ENCODE measurements at regions of chr2 and their contacts with region 1.

Region 1: GRCh38 chr2:23524261-23524706 is 139.3 kb downstream of the KLHL29 start:
- DNase-seq: peak; percentile 33 to 92
- H3K4me3 ChIP-seq: peak overlapping the region; percentile 32 to 48
- H3K27ac ChIP-seq: peak overlapping the region; percentile 83 to 94
- H3K4me1 ChIP-seq: peaks cover 13 to 33% of the 10 kb centered on the region in 2 donors
- H3K27me3 ChIP-seq: no peaks in the 10 kb centered on the region
- CTCF ChIP-seq: no peak

Region 2: GRCh38 chr2:23135481-23136100 is 388.7 kb before region 1 on chr2:
- intact Hi-C with region 1: loop called (anchors 10 kb)
- DNase-seq: peak; percentile 23 to 82
- H3K4me3 ChIP-seq: peak overlapping the region in 1 of 2 donors; percentile 29
- H3K27ac ChIP-seq: peak overlapping the region; percentile 44 to 58
- H3K4me1 ChIP-seq: peaks cover 0 to 9% of the 10 kb centered on the region in 2 donors
- H3K27me3 ChIP-seq: no peaks in the 10 kb centered on the region
- CTCF ChIP-seq: no peak

Region 3: GRCh38 chr2:23384551-23385349 is 139.5 kb before region 1 on chr2 and contains the start of gene KLHL29:
- intact Hi-C with region 1: loop called (anchors 2 kb)
- DNase-seq: peak in 1 of 2 donors; percentile 88
- H3K4me3 ChIP-seq: peak within 1 kb of the TSS; percentile 79 to 86
- H3K27ac ChIP-seq: peak within 1 kb of the TSS; percentile 80 to 87
- H3K4me1 ChIP-seq: peaks cover 0 to 2% of the 10 kb centered on the region in 2 donors
- H3K27me3 ChIP-seq: no peaks in the 10 kb centered on the region
- CTCF ChIP-seq: no peak
- total RNA-seq, gene KLHL29: 16.3 TPM

Region 4: GRCh38 chr2:23426263-23426905 is 97.9 kb before region 1 on chr2:
- intact Hi-C with region 1: loop called (anchors 1 kb)
- DNase-seq: peak; percentile 51 to 91
- H3K4me3 ChIP-seq: no peak overlapping the region
- H3K27ac ChIP-seq: peak overlapping the region; percentile 74 to 83
- H3K4me1 ChIP-seq: peaks cover 9 to 21% of the 10 kb centered on the region in 2 donors
- H3K27me3 ChIP-seq: no peaks in the 10 kb centered on the region
- CTCF ChIP-seq: no peak

Region 5: GRCh38 chr2:23497063-23497462 is 27.2 kb before region 1 on chr2:
- intact Hi-C with region 1: loop called (anchors 1 kb)
- DNase-seq: peak; percentile 39 to 86
- H3K4me3 ChIP-seq: no peak overlapping the region
- H3K27ac ChIP-seq: peak overlapping the region; percentile 51 to 66
- H3K4me1 ChIP-seq: peaks cover 21 to 42% of the 10 kb centered on the region in 2 donors
- H3K27me3 ChIP-seq: no peaks in the 10 kb centered on the region
- CTCF ChIP-seq: no peak

Region 6: GRCh38 chr2:23584054-23584745 is 59.9 kb after region 1 on chr2:
- intact Hi-C with region 1: loop called (anchors 2 kb)
- DNase-seq: peak; percentile 38 to 83
- H3K4me3 ChIP-seq: peak overlapping the region in 1 of 2 donors; percentile 8
- H3K27ac ChIP-seq: peak overlapping the region; percentile 67 to 81
- H3K4me1 ChIP-seq: peaks cover 3 to 4% of the 10 kb centered on the region in 2 donors
- H3K27me3 ChIP-seq: no peaks in the 10 kb centered on the region
- CTCF ChIP-seq: no peak

Region 7: DNA sequence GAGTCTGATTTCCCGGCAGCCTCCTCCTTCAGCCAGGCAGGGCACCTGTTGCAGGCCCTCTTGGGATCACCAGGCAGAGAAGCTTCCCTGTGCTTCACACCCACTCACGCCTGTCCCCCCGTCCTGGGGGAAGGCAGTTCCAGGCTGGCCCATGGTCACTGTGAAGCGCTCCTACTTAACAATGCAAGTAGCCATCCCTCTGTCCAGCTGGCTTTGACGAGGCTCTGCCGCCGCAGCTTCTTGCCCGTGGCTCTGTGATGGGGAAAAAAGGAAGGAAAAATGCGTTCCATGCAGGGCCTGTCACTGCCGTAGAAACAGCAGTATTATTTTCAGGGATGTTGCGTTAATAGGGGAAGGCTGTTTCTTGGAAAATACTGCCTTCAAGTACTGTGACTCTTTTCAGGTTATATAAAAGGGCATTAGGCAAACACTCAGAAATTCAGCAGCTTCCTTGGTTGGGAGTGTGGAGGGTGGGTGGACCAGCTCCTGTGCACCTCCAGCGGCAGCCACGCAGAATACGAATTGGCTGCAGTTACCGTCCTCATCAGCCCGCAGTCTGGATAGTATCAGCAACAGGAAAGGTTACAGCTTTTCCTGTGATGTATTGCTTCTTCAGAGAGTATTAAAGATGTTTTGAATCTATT is 93.0 kb after region 1 on chr2:
- intact Hi-C with region 1: loop called (anchors 5 kb)
- DNase-seq: peak in 1 of 2 donors; percentile 81
- H3K4me3 ChIP-seq: no peak overlapping the region
- H3K27ac ChIP-seq: peak overlapping the region; percentile 52 to 72
- H3K4me1 ChIP-seq: peaks cover 0 to 13% of the 10 kb centered on the region in 2 donors
- H3K27me3 ChIP-seq: no peaks in the 10 kb centered on the region
- CTCF ChIP-seq: peak in 2 of 3 experiments; percentile 31 to 33

Region 8: DNA sequence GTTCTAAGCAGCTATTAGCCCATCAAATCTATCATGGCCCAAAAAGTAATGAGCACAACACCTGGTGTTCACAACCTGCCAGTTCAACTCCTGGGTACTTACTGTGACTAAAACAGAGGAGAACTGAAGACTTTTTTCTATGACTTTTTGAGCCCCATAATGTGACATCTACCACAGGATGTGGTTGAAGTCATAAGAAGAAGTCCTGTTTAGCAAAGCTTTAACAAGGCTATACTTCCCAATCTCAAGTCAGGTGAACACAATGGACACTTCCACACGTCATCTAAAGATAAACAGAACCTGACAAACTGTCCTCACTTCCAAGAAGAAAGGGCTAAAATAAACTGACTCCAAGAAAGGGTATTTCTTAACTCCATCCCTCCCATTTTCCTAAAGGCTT is 263.8 kb after region 1 on chr2:
- intact Hi-C with region 1: no loop called
- DNase-seq: no peak
- H3K4me3 ChIP-seq: no peak overlapping the region
- H3K27ac ChIP-seq: no peak overlapping the region
- H3K4me1 ChIP-seq: no peaks in the 10 kb centered on the region
- H3K27me3 ChIP-seq: no peaks in the 10 kb centered on the region
- CTCF ChIP-seq: no peak